CD4-positive, alpha-beta T cell (primary cell): ENCODE measurements at regions of chr6 and their contacts with region 1.

Region 1: GRCh38 chr6:33147807-33148666 is 44.2 kb downstream of the COL11A2 start:
- DNase-seq: peak in 4 of 14 experiments; percentile 12 to 54 (median 41)
- ATAC-seq: no peak
- H3K4me3 ChIP-seq: no peak overlapping the region
- H3K4me3 Mint-ChIP-seq: no peak overlapping the region
- H3K27ac ChIP-seq: no peak overlapping the region
- H3K27ac Mint-ChIP-seq: no peak overlapping the region
- H3K4me1 ChIP-seq: no peaks in the 10 kb centered on the region
- H3K4me1 Mint-ChIP-seq: no peaks in the 10 kb centered on the region
- H3K27me3 ChIP-seq: peaks cover 11% of the 10 kb centered on the region in 2 experiments
- H3K27me3 Mint-ChIP-seq: peaks cover 35% of the 10 kb centered on the region
- CTCF ChIP-seq: peak; percentile 91

Region 2: DNA sequence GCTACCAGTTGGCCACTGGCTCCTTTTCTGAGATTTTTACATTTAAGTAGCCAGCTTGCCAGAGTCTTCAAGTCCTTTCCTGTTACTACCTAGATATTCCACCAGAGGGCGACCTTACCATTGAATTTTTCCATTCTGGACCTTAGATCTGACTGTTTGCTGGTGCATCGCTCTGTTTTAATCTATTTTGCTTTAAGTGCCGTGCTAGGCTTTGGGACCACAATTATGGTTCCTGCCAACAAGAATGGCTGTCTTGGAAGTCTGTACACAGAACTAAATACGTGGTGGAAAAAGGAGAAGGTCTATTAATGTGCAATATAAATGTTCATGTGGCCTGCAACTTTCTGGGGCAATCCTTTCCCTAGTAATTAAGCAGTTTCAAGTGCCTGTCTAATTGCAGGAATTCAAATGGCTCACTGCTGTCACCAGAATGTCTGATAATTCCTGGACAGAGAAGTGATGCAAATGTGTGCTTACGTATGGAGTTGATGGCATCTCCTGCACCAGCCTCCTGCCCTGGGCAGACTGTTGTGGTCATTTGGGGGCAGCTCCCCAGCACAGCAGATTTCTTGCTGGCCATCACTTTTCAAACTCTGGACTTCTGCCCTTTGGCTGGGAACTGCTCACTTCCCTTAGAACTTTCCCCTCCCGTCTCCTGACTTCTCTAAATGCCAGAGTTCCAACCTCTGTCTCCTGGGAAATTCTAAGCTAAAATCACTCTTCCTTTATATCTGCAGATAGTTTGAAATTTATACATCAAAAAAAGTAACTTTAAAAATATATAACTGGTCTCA is 133.0 kb before region 1 on chr6:
- CTCF ChIA-PET with region 1: no interaction called
- POLR2A ChIA-PET with region 1: no interaction called
- intact Hi-C with region 1: loop called (anchors 2 kb)
- DNase-seq: peak in 9 of 14 experiments; percentile 8 to 88 (median 48)
- ATAC-seq: peak; percentile 78
- H3K4me3 ChIP-seq: no peak overlapping the region
- H3K4me3 Mint-ChIP-seq: no peak overlapping the region
- H3K27ac ChIP-seq: no peak overlapping the region
- H3K27ac Mint-ChIP-seq: no peak overlapping the region
- H3K4me1 ChIP-seq: peaks cover 22% of the 10 kb centered on the region
- H3K4me1 Mint-ChIP-seq: peaks cover 36% of the 10 kb centered on the region
- H3K27me3 ChIP-seq: peaks cover 8 to 10% of the 10 kb centered on the region in 2 experiments
- H3K27me3 Mint-ChIP-seq: peaks cover 5% of the 10 kb centered on the region
- CTCF ChIP-seq: peak; percentile 89

Region 3: DNA sequence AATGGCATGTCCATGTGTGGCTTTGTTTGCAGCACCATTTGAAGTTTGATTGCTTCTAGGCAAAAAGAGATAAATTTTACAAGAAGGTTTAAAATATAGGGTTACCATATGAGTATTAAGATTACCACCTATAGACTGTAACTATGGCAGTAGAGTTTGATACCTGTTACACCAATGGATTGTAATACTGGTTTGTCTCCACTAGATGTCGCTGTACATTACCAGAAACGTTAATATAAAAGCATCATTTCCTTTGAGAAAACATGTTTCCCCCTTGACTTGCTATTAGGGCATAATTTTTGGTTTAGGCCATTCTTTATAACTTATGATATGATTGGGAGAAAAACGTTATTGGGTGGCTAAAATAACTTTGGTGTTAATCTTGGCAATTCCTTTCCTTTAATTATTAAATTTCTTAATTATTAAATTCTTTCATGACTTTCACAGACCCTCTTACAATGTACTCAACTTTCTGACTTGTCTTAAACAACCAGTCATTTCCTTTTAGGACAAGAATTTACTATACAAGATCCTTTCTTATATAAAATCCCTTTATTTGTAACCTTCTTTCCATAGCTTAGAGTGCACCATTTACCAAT is 29.4 kb before region 1 on chr6:
- CTCF ChIA-PET with region 1: no interaction called
- POLR2A ChIA-PET with region 1: no interaction called
- intact Hi-C with region 1: loop called in 1 of 2 experiments (anchors 2 kb)
- DNase-seq: peak in 4 of 14 experiments; percentile 28 to 85 (median 78)
- ATAC-seq: peak; percentile 80
- H3K4me3 ChIP-seq: no peak overlapping the region
- H3K4me3 Mint-ChIP-seq: no peak overlapping the region
- H3K27ac ChIP-seq: no peak overlapping the region
- H3K27ac Mint-ChIP-seq: no peak overlapping the region
- H3K4me1 ChIP-seq: peaks cover 20% of the 10 kb centered on the region
- H3K4me1 Mint-ChIP-seq: peaks cover 15% of the 10 kb centered on the region
- H3K27me3 ChIP-seq: peaks cover 30 to 36% of the 10 kb centered on the region in 2 experiments
- H3K27me3 Mint-ChIP-seq: peaks cover 65% of the 10 kb centered on the region
- CTCF ChIP-seq: peak; percentile 82

Region 4: DNA sequence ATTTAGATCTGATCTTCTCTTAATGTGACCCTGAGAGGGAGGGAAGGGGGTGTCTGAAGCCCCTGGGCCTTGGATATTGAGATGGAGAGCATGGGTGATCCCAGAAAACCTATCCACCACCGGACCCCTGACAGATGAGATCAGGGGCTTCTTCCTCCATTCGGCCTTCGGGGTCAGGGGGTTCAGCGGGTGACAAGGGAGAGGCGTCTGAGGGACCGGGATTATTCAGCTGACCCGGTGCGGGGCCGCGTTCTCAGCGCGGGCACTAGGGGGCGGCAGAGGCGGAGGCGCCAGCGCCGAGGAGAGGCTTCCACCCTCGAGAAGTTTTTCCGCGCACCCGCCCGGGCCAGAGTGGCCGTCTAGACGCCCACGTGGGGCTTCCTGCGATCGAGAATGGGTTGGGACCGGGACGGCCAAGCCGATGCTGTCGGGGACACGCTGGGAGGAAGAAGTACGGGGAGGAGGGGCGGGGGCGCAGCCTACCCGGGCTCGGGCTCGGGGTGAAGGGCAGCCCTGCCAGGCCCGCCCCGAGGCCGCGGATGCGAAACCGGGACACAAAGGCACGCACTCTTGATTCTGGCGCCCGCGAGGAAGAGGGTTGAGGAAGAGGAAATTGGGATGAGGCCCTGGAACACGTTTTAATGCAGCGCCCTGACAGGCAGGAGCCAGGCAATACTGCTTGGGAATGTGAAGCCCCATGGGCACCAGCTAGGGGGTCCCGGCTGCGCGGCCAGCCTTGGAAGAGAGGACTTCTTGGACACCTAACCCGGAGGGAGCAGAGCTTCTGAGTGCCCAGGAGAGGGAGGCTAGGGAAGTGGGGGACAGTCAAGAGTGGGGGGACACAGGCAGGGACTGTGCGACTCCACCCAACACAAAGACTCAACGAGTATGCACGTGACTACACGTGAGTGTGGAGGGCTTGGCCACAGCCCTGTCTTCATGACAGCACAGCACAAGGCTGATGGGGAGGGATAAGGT is 13.6 kb after region 1 on chr6:
- CTCF ChIA-PET with region 1: interaction called, 3 read pairs
- POLR2A ChIA-PET with region 1: interaction called, 3 read pairs
- intact Hi-C with region 1: loop called in 1 of 2 experiments (anchors 2 kb)
- DNase-seq: peak; percentile 64 to 89 (median 80)
- ATAC-seq: peak; percentile 97
- H3K4me3 ChIP-seq: peak overlapping the region; percentile 46
- H3K4me3 Mint-ChIP-seq: peak overlapping the region; percentile 87
- H3K27ac ChIP-seq: no peak overlapping the region
- H3K27ac Mint-ChIP-seq: no peak overlapping the region
- H3K4me1 ChIP-seq: peaks cover 16% of the 10 kb centered on the region
- H3K4me1 Mint-ChIP-seq: peaks cover 10% of the 10 kb centered on the region
- H3K27me3 ChIP-seq: no peaks in the 10 kb centered on the region
- H3K27me3 Mint-ChIP-seq: no peaks in the 10 kb centered on the region
- CTCF ChIP-seq: peak; percentile 90

Region 5: DNA sequence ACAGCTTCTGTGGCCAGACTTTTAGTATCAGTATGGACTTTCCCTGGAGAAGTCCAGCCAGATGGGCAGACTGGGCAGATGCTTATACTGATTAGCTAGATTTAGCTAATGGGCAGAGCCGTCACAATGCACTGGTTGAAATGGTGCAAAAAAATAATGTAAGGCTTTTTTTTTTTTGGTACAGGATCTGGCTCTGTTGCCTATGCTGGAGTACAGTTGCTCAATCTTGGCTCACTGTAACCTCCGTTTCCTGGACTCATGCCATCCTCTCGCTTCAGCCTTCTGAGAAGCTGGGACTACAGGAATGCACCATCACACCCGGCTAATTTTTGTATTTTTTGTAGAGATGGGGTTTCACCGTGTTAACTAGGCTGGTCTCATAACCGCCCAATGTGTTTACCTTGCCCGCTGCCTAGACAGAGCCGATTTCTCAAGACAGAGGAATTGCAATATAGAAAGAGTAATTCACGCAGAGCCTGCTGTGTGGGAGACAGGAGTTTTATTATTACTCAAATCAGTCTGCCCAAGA is 227.2 kb after region 1 on chr6:
- CTCF ChIA-PET with region 1: no interaction called
- POLR2A ChIA-PET with region 1: no interaction called
- intact Hi-C with region 1: loop called in 1 of 2 experiments (anchors 10 kb)
- DNase-seq: no peak
- ATAC-seq: no peak
- H3K4me3 ChIP-seq: no peak overlapping the region
- H3K4me3 Mint-ChIP-seq: no peak overlapping the region
- H3K27ac ChIP-seq: no peak overlapping the region
- H3K27ac Mint-ChIP-seq: no peak overlapping the region
- H3K4me1 ChIP-seq: peaks cover 6% of the 10 kb centered on the region
- H3K4me1 Mint-ChIP-seq: peaks cover 10% of the 10 kb centered on the region
- H3K27me3 ChIP-seq: no peaks in the 10 kb centered on the region
- H3K27me3 Mint-ChIP-seq: no peaks in the 10 kb centered on the region
- CTCF ChIP-seq: no peak